ENCODE measurements at regions of chr5 and their contacts with region 1.

Region 1: DNA sequence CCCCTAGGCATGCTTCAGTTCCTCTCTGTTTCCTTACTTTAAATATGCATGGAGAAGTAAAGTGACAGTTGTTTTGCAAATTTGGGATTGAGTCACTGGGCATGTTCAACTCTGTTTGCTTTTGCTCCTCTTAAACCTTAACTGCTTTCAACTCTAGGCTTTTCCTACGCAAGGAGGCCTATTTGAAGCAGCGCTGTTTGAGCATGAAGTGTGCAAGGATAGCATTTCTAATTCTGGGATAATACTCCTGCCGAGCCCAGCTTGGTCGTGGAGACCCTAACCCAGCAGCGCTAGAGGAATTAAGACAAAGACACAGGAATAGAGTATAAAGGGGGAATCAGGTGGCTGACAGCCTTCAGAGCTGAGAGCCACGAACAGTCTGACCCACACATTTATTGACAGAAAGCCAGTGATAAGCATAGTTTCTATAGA is 803.4 kb upstream of the CDH10 start:
- DNase-seq: no peak
- H3K4me3 ChIP-seq: peak overlapping the region in 2 of 4 experiments; percentile 8 to 38; a peak in 3 of 8 replicates
- H3K27ac ChIP-seq: peak overlapping the region; percentile 78; the same call in 1 of the 2 replicates
- H3K4me1 ChIP-seq: peaks cover 0 to 27% (median 17%) of the 10 kb centered on the region in 4 experiments; a peak in 4 of 7 replicates
- H3K27me3 ChIP-seq: no peaks in the 10 kb centered on the region
- CTCF ChIP-seq: no peak
- EP300 ChIP-seq: no peak
- POLR2A ChIP-seq: peak in 1 of 2 experiments; percentile 30; a peak in 1 of 3 replicates
- RAD21 ChIP-seq: no peak; a peak in 1 of 4 replicates

Region 2: GRCh38 chr5:25427233-25427632 is 21.0 kb before region 1 on chr5:
- CTCF ChIA-PET with region 1: interaction called, 3 read pairs
- POLR2A ChIA-PET with region 1: interaction called, 79 read pairs
- DNase-seq: no peak
- H3K4me3 ChIP-seq: no peak overlapping the region
- H3K27ac ChIP-seq: no peak overlapping the region
- H3K4me1 ChIP-seq: no peaks in the 10 kb centered on the region; a peak in 1 of 7 replicates
- H3K27me3 ChIP-seq: no peaks in the 10 kb centered on the region
- CTCF ChIP-seq: no peak
- EP300 ChIP-seq: no peak
- POLR2A ChIP-seq: no peak
- RAD21 ChIP-seq: no peak

Region 3: GRCh38 chr5:25568979-25569625 is 120.9 kb after region 1 on chr5:
- CTCF ChIA-PET with region 1: interaction called, 4 read pairs
- POLR2A ChIA-PET with region 1: interaction called, 12 read pairs
- DNase-seq: no peak
- H3K4me3 ChIP-seq: no peak overlapping the region
- H3K27ac ChIP-seq: no peak overlapping the region
- H3K4me1 ChIP-seq: peaks cover 0 to 5% (median 3%) of the 10 kb centered on the region in 4 experiments; a peak in 4 of 7 replicates
- H3K27me3 ChIP-seq: no peaks in the 10 kb centered on the region
- CTCF ChIP-seq: no peak
- EP300 ChIP-seq: no peak
- POLR2A ChIP-seq: no peak
- RAD21 ChIP-seq: no peak